Pancreas (tissue), 10 donors: ENCODE measurements at regions of chr6 and their contacts with region 1.

Region 1: GRCh38 chr6:37691904-37692806 is 5.5 kb downstream of the MDGA1 start:
- DNase-seq: peak; percentile 37 to 93 (median 78)
- ATAC-seq: peak; percentile 80 to 91 (median 90)
- H3K4me3 ChIP-seq: no peak overlapping the region
- H3K27ac ChIP-seq: no peak overlapping the region
- H3K4me1 ChIP-seq: peaks cover 0 to 8% (median 7%) of the 10 kb centered on the region in 3 donors
- H3K27me3 ChIP-seq: peaks cover 0 to 5% (median 0%) of the 10 kb centered on the region in 4 donors
- CTCF ChIP-seq: peak; percentile 90 to 96 (median 92)

Region 2: DNA sequence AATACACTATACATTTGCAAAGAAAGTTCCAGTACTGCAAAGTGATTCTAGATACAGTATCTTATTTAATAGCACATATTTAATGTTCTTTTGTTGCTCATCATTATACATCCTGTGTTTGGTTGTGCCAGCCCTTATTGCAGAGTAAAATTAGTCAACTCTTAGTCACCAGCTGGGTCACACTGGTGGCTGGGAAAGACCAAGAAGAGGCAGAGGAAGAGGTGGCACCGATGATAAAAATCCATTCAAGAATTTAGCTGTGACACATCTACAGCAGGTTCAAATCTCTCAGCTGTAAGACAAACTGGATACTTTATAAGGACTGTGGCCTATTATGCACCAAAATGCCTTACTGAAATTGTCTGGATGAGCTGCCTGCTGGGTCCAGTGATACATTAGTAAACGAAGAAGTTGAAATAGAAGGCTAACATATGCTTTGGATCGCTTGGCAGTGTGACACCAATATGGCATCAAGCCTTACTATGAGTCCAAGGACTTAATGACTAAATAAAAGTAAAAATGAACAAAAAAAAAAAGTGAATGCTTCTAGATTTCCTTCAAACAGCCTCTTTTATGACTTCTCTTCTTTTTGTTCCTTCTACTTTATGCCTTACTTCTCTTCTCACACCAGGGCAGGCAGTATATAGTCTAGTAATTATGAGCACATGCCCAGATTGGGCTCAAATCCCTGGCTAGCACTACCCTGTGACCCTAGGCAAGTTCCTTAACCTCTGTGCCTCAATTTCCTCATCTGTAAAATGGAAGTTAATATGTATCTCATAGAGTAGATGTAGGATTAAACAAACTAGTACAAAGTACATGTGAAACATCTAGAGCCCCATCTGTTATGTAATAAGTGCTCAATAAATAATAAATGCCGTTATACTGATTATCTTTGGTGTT is 367.8 kb before region 1 on chr6:
- intact Hi-C with region 1: loop called in 1 of 3 experiments (anchors 5 kb)
- DNase-seq: no peak
- ATAC-seq: no peak
- H3K4me3 ChIP-seq: no peak overlapping the region
- H3K27ac ChIP-seq: no peak overlapping the region
- H3K4me1 ChIP-seq: no peaks in the 10 kb centered on the region
- H3K27me3 ChIP-seq: no peaks in the 10 kb centered on the region
- CTCF ChIP-seq: no peak

Region 3: GRCh38 chr6:37483917-37484785 is 208.0 kb before region 1 on chr6:
- intact Hi-C with region 1: loop called in 2 of 3 experiments (anchors 5 kb)
- DNase-seq: peak in 4 of 6 donors; percentile 52 to 84 (median 70)
- ATAC-seq: peak; percentile 60 to 88 (median 84)
- H3K4me3 ChIP-seq: no peak overlapping the region
- H3K27ac ChIP-seq: no peak overlapping the region
- H3K4me1 ChIP-seq: no peaks in the 10 kb centered on the region
- H3K27me3 ChIP-seq: no peaks in the 10 kb centered on the region
- CTCF ChIP-seq: peak; percentile 24 to 65 (median 56)

Region 4: DNA sequence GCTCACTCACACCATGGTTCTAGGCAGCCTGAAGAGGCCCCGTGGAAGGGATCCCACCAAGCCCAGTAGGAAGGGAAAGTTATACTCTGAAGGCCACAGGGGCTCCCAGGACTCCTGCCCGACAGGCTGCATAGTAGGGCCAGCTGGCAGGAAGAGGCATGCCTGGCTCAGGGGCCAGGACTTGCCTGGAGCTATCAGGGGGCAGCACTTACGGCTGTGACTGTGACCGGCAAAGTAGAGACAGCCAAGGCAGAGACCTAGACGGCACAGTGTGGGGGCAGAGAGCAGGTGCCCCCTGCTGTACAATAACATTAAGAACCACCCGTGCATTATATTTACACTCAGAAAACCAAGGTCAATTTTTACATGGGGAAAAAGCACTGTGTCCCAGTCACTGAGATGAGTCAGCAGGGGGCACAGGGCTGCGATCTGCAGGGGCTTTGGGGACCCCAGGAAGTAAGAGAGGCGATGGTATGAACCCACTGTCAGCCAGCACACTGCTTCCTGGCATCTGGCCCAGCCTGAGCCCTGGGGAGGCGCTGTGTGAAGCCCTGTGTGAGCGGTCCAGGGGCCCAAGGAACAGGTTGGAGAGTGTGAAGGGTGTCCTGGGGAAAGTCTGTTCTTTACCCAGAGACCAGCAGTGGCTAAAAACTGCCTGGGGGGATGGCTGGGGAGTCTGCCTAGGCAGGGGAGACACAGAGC is 202.3 kb before region 1 on chr6:
- intact Hi-C with region 1: loop called in 1 of 3 experiments (anchors 5 kb)
- DNase-seq: peak in 1 of 6 donors; percentile 51
- ATAC-seq: peak in 3 of 4 donors; percentile 17 to 49 (median 42)
- H3K4me3 ChIP-seq: no peak overlapping the region
- H3K27ac ChIP-seq: no peak overlapping the region
- H3K4me1 ChIP-seq: no peaks in the 10 kb centered on the region
- H3K27me3 ChIP-seq: no peaks in the 10 kb centered on the region
- CTCF ChIP-seq: no peak

Region 5: GRCh38 chr6:37516076-37516919 is 175.9 kb before region 1 on chr6:
- intact Hi-C with region 1: no loop called
- DNase-seq: peak in 5 of 6 donors; percentile 18 to 77 (median 54)
- ATAC-seq: peak; percentile 63 to 84 (median 76)
- H3K4me3 ChIP-seq: no peak overlapping the region
- H3K27ac ChIP-seq: no peak overlapping the region
- H3K4me1 ChIP-seq: peaks cover 0 to 3% (median 0%) of the 10 kb centered on the region in 3 donors
- H3K27me3 ChIP-seq: no peaks in the 10 kb centered on the region
- CTCF ChIP-seq: no peak